Keratinocyte (primary cell): ENCODE measurements at regions of chr1 and their contacts with region 1.

Region 1: GRCh38 chr1:43946236-43947060 is at the start of gene IPO13:
- DNase-seq: peak; percentile 81
- H3K4me3 ChIP-seq: peak within 1 kb of the TSS; percentile 72 to 85 (median 79)
- H3K27ac ChIP-seq: peak within 1 kb of the TSS; percentile 97
- H3K4me1 ChIP-seq: peaks cover 24% of the 10 kb centered on the region
- H3K27me3 ChIP-seq: no peaks in the 10 kb centered on the region
- CTCF ChIP-seq: peak; percentile 50 to 86 (median 79)
- polyA plus RNA-seq, gene IPO13: 20.7 to 40.0 TPM (median 35.7 TPM) in 3 replicates

Region 2: GRCh38 chr1:43256675-43257570 is 689.5 kb before region 1 on chr1:
- dilution Hi-C with region 1: no loop called
- DNase-seq: no peak
- H3K4me3 ChIP-seq: no peak overlapping the region
- H3K27ac ChIP-seq: no peak overlapping the region
- H3K4me1 ChIP-seq: no peaks in the 10 kb centered on the region
- H3K27me3 ChIP-seq: peaks cover 16% of the 10 kb centered on the region
- CTCF ChIP-seq: no peak

Region 3: GRCh38 chr1:43706598-43707495 is 239.6 kb before region 1 on chr1:
- dilution Hi-C with region 1: loop called (anchors 25 kb)
- DNase-seq: peak; percentile 52
- H3K4me3 ChIP-seq: peak overlapping the region; percentile 64 to 86 (median 81)
- H3K27ac ChIP-seq: peak overlapping the region; percentile 67
- H3K4me1 ChIP-seq: peaks cover 36% of the 10 kb centered on the region
- H3K27me3 ChIP-seq: no peaks in the 10 kb centered on the region
- CTCF ChIP-seq: no peak

Region 4: GRCh38 chr1:43836267-43836951 is 110.0 kb before region 1 on chr1:
- dilution Hi-C with region 1: loop called (anchors 25 kb)
- DNase-seq: peak; percentile 64
- H3K4me3 ChIP-seq: no peak overlapping the region
- H3K27ac ChIP-seq: peak overlapping the region; percentile 32
- H3K4me1 ChIP-seq: peaks cover 36% of the 10 kb centered on the region
- H3K27me3 ChIP-seq: no peaks in the 10 kb centered on the region
- CTCF ChIP-seq: no peak

Region 5: DNA sequence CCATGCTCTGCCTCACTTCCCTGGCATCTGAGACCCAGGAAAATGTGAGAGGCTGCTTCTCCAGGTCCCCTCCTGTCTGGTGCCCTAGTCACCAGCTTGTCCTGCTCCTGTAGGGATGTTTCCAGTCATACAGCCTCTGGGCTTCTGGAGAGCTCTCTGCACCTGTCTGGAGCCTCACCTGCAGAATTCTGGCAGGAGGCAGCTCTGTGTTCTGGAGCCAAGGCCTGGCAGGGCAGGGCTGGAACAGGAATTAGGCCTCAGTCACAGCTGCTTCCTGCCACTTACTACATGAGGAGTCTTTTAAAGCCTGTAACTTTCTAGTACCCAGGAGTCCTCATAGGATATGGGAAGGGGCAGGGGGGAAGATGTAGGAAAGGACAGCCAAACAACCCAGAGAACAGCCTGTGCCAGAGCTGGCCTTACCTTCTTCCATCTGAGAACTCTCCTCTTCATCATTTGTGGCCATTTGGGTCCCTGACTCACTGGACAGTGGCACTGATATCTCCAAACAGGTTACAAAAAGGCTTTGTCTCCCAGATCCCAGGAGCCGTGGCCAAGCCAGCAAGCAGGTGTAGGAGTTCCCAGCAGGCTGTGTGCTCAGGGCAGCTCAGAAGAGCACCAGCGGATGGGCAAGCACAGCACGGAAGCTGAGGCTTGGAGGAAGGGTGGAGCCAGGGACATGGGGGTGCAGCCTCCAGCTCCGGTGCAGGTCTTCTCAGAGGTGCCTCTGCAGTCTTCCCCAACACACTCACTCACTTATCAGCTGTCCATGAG is 44.2 kb before region 1 on chr1:
- dilution Hi-C with region 1: no loop called
- DNase-seq: no peak
- H3K4me3 ChIP-seq: no peak overlapping the region
- H3K27ac ChIP-seq: no peak overlapping the region
- H3K4me1 ChIP-seq: peaks cover 9% of the 10 kb centered on the region
- H3K27me3 ChIP-seq: no peaks in the 10 kb centered on the region
- CTCF ChIP-seq: no peak

Region 6: GRCh38 chr1:44327679-44328491 is 381.4 kb after region 1 on chr1:
- dilution Hi-C with region 1: no loop called
- DNase-seq: peak; percentile 100
- H3K4me3 ChIP-seq: peak overlapping the region in 2 of 3 experiments; percentile 16 to 22
- H3K27ac ChIP-seq: peak overlapping the region; percentile 93
- H3K4me1 ChIP-seq: peaks cover 42% of the 10 kb centered on the region
- H3K27me3 ChIP-seq: no peaks in the 10 kb centered on the region
- CTCF ChIP-seq: no peak